AG04450 (cell line): ENCODE measurements at regions of chr12 and their contacts with region 1.

Region 1: GRCh38 chr12:21677622-21678277 is 20.1 kb upstream of the LDHB start:
- DNase-seq: no peak
- H3K4me3 ChIP-seq: no peak overlapping the region
- H3K27ac ChIP-seq: no peak overlapping the region
- H3K27me3 ChIP-seq: peaks cover 7% of the 10 kb centered on the region
- CTCF ChIP-seq: no peak

Region 2: DNA sequence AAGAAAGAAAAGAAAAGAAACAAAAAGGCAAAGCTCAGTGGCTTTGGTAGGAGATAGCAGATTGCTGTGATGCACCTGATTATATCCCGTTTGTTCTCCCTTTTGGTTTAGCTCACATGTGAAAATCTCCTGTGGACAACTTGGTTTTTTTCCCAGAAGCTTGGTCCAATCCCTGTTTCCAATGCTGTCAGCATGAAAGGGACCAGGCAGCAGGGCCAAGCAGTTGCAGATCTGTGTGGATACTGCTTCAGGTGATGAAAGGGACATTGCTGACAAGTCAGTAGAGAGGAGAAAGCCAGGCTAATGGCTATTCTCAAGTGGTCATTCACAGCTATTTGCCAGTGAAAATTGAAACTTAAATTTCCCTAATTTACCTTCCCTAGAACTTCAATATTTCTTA is 324.3 kb before region 1 on chr12:
- CTCF ChIA-PET with region 1: no interaction called
- POLR2A ChIA-PET with region 1: no interaction called
- DNase-seq: no peak
- H3K4me3 ChIP-seq: no peak overlapping the region
- H3K27ac ChIP-seq: no peak overlapping the region
- H3K27me3 ChIP-seq: no peaks in the 10 kb centered on the region
- CTCF ChIP-seq: no peak

Region 3: GRCh38 chr12:21518451-21518850 is 159.3 kb before region 1 on chr12:
- CTCF ChIA-PET with region 1: no interaction called
- POLR2A ChIA-PET with region 1: no interaction called
- DNase-seq: no peak
- H3K4me3 ChIP-seq: no peak overlapping the region
- H3K27ac ChIP-seq: no peak overlapping the region
- H3K27me3 ChIP-seq: no peaks in the 10 kb centered on the region
- CTCF ChIP-seq: no peak

Region 4: DNA sequence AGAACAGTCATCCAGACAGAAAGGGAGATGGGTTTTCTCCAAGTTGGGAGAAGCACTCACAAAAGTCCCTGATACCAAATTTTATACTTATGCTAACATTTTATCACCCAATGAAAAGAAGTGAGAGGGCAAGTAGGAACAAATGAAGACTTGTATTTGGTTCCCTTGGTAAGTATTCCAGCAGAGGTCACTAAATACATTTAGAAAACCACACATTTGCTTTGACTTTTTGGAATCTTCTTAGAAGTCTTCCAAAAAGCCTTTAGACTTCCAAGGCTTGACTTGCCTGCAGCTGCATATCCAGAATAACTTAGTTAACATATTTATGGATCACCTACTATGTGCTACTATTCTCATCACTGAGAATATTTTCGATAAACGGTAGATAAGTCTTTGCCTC is 70.0 kb before region 1 on chr12:
- CTCF ChIA-PET with region 1: interaction called, 14 read pairs
- POLR2A ChIA-PET with region 1: no interaction called
- DNase-seq: no peak
- H3K4me3 ChIP-seq: no peak overlapping the region
- H3K27ac ChIP-seq: no peak overlapping the region
- H3K27me3 ChIP-seq: no peaks in the 10 kb centered on the region
- CTCF ChIP-seq: peak; percentile 42

Region 5: GRCh38 chr12:21651821-21652220 is 25.9 kb before region 1 on chr12:
- CTCF ChIA-PET with region 1: interaction called, 11 read pairs
- POLR2A ChIA-PET with region 1: no interaction called
- DNase-seq: no peak
- H3K4me3 ChIP-seq: no peak overlapping the region
- H3K27ac ChIP-seq: no peak overlapping the region
- H3K27me3 ChIP-seq: no peaks in the 10 kb centered on the region
- CTCF ChIP-seq: no peak

Region 6: GRCh38 chr12:21666722-21667121 is 11.0 kb before region 1 on chr12:
- CTCF ChIA-PET with region 1: interaction called, 38 read pairs
- POLR2A ChIA-PET with region 1: no interaction called
- DNase-seq: no peak
- H3K4me3 ChIP-seq: no peak overlapping the region
- H3K27ac ChIP-seq: no peak overlapping the region
- H3K27me3 ChIP-seq: peaks cover 3% of the 10 kb centered on the region
- CTCF ChIP-seq: no peak

Region 7: GRCh38 chr12:21989819-21990412 is 312.2 kb after region 1 on chr12:
- CTCF ChIA-PET with region 1: interaction called, 26 read pairs
- POLR2A ChIA-PET with region 1: no interaction called
- DNase-seq: no peak
- H3K4me3 ChIP-seq: no peak overlapping the region
- H3K27ac ChIP-seq: no peak overlapping the region
- H3K27me3 ChIP-seq: no peaks in the 10 kb centered on the region
- CTCF ChIP-seq: peak; percentile 78